ENCODE measurements at regions of chr2 and their contacts with region 1.

Region 1: DNA sequence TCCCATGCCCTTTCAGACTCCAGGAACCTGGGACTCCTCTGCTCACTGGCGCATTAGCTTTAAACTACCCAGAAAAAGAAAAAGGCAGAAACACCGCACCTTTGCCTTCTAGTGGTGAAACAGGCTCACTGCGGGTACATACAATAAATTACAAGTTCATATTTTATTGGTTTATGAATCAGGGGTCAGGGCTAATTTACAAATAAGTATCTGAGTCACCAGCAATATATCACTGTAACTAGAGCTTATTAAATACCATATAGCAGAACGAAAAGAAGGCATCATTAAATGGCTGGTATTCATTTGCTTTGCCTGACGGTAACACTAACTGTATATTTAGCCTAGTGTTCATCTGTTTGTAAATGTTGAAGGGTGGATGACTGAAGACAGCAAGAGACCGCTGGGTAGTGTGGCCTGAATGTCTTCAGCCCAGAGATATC is 26.9 kb upstream of the DTNB start:
- DNase-seq: no peak
- H3K4me3 ChIP-seq: no peak overlapping the region
- CTCF ChIP-seq: peak; percentile 58

Region 2: GRCh38 chr2:25606892-25607291 is 93.3 kb before region 1 on chr2:
- CTCF ChIA-PET with region 1: interaction called, 132 read pairs
- POLR2A ChIA-PET with region 1: no interaction called
- DNase-seq: no peak
- H3K4me3 ChIP-seq: no peak overlapping the region
- CTCF ChIP-seq: peak; percentile 20

Region 3: GRCh38 chr2:25673300-25674076 is 26.8 kb before region 1 on chr2 and contains the start of gene DTNB:
- CTCF ChIA-PET with region 1: interaction called, 24 read pairs
- POLR2A ChIA-PET with region 1: no interaction called
- DNase-seq: no peak
- H3K4me3 ChIP-seq: peak within 1 kb of the TSS; percentile 72
- CTCF ChIP-seq: no peak

Region 4: GRCh38 chr2:25682082-25682481 is 18.2 kb before region 1 on chr2:
- CTCF ChIA-PET with region 1: interaction called, 72 read pairs
- POLR2A ChIA-PET with region 1: no interaction called
- DNase-seq: no peak
- H3K4me3 ChIP-seq: no peak overlapping the region
- CTCF ChIP-seq: no peak

Region 5: DNA sequence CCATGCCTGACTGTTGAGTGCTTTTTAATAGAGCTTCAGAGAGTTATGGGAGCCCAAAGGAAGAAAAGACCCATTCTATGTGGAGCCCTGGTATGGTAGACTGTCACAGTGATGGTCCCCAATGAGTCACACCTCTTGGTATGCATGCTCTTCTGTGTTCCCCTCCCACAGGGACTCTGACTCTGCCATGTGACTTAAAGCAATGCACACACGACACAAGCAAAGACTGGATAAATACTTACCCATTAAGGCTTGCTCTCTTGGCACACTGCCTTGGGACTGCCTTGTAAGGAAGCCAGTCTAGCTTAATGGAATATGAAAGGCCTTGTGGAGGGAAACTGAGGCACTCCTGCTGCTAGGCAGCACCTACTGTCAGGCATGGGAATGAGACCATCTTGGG is 10.2 kb before region 1 on chr2:
- CTCF ChIA-PET with region 1: interaction called, 72 read pairs
- POLR2A ChIA-PET with region 1: no interaction called
- DNase-seq: no peak
- H3K4me3 ChIP-seq: no peak overlapping the region
- CTCF ChIP-seq: no peak

Region 6: GRCh38 chr2:25714740-25715139 is 14.5 kb after region 1 on chr2:
- CTCF ChIA-PET with region 1: interaction called, 70 read pairs
- POLR2A ChIA-PET with region 1: interaction called, 3 read pairs
- DNase-seq: no peak
- H3K4me3 ChIP-seq: no peak overlapping the region
- CTCF ChIP-seq: no peak